ENCODE measurements at regions of chr21 and their contacts with region 1.

Region 1: GRCh38 chr21:44873356-44874239 is at the start of gene PTTG1IP:
- DNase-seq: peak; percentile 98 to 100 (median 99)
- ATAC-seq: peak; percentile 76
- H3K4me3 ChIP-seq: peak within 1 kb of the TSS; percentile 76
- H3K4me3 Mint-ChIP-seq: peak within 1 kb of the TSS; percentile 97
- H3K27ac ChIP-seq: peak within 1 kb of the TSS; percentile 78 to 81
- H3K27ac Mint-ChIP-seq: peak within 1 kb of the TSS; percentile 92
- H3K4me1 ChIP-seq: peaks cover 62% of the 10 kb centered on the region
- H3K4me1 Mint-ChIP-seq: peaks cover 60% of the 10 kb centered on the region
- H3K27me3 ChIP-seq: no peaks in the 10 kb centered on the region
- H3K27me3 Mint-ChIP-seq: no peaks in the 10 kb centered on the region
- CTCF ChIP-seq: no peak
- total RNA-seq, gene PTTG1IP: 99.0 to 99.5 TPM

Region 2: GRCh38 chr21:44510508-44511210 is 362.9 kb before region 1 on chr21:
- CTCF ChIA-PET with region 1: interaction called, 8 read pairs
- POLR2A ChIA-PET with region 1: no interaction called
- intact Hi-C with region 1: loop called in 1 of 2 experiments (anchors 5 kb)
- DNase-seq: peak; percentile 68 to 91 (median 82)
- ATAC-seq: peak; percentile 96
- H3K4me3 ChIP-seq: peak overlapping the region; percentile 41
- H3K4me3 Mint-ChIP-seq: peak overlapping the region; percentile 42
- H3K27ac ChIP-seq: no peak overlapping the region
- H3K27ac Mint-ChIP-seq: no peak overlapping the region
- H3K4me1 ChIP-seq: peaks cover 12% of the 10 kb centered on the region
- H3K4me1 Mint-ChIP-seq: no peaks in the 10 kb centered on the region
- H3K27me3 ChIP-seq: no peaks in the 10 kb centered on the region
- H3K27me3 Mint-ChIP-seq: no peaks in the 10 kb centered on the region
- CTCF ChIP-seq: peak; percentile 96

Region 3: DNA sequence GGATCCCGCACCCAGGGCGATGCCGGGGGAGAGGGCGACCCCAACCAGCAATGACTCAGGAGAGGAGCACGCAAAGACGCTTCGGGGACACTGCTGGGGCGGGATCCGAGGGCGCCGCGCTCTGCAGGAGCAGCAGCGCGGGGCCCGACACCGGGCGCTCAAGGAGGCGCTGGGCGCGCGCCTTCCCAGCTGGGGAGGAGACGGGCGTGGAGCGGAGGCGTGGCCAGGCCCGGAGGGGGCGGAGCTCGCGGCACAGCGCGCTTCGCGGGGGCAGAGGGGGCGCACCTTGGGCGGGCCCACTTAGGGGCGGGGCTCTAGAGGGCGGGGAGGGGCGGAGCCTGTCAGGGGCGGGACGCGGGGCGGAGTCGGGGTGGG is 56.1 kb before region 1 on chr21:
- CTCF ChIA-PET with region 1: interaction called, 3 read pairs
- POLR2A ChIA-PET with region 1: interaction called, 29 read pairs
- intact Hi-C with region 1: loop called (anchors 1 to 2 kb)
- DNase-seq: peak; percentile 87 to 97 (median 94)
- ATAC-seq: peak; percentile 85
- H3K4me3 ChIP-seq: peak overlapping the region; percentile 61
- H3K4me3 Mint-ChIP-seq: peak overlapping the region; percentile 82
- H3K27ac ChIP-seq: no peak overlapping the region
- H3K27ac Mint-ChIP-seq: peak overlapping the region; percentile 65
- H3K4me1 ChIP-seq: peaks cover 19% of the 10 kb centered on the region
- H3K4me1 Mint-ChIP-seq: peaks cover 13% of the 10 kb centered on the region
- H3K27me3 ChIP-seq: no peaks in the 10 kb centered on the region
- H3K27me3 Mint-ChIP-seq: no peaks in the 10 kb centered on the region
- CTCF ChIP-seq: no peak

Region 4: GRCh38 chr21:44854664-44855446 is 18.7 kb before region 1 on chr21:
- CTCF ChIA-PET with region 1: no interaction called
- POLR2A ChIA-PET with region 1: interaction called, 13 read pairs
- intact Hi-C with region 1: loop called (anchors 2 kb)
- DNase-seq: peak in 7 of 14 experiments; percentile 26 to 55 (median 38)
- ATAC-seq: peak; percentile 71
- H3K4me3 ChIP-seq: no peak overlapping the region
- H3K4me3 Mint-ChIP-seq: peak overlapping the region; percentile 58
- H3K27ac ChIP-seq: peak overlapping the region in 1 of 2 donors; percentile 15
- H3K27ac Mint-ChIP-seq: peak overlapping the region; percentile 95
- H3K4me1 ChIP-seq: peaks cover 43% of the 10 kb centered on the region
- H3K4me1 Mint-ChIP-seq: peaks cover 62% of the 10 kb centered on the region
- H3K27me3 ChIP-seq: no peaks in the 10 kb centered on the region
- H3K27me3 Mint-ChIP-seq: no peaks in the 10 kb centered on the region
- CTCF ChIP-seq: no peak

Region 5: DNA sequence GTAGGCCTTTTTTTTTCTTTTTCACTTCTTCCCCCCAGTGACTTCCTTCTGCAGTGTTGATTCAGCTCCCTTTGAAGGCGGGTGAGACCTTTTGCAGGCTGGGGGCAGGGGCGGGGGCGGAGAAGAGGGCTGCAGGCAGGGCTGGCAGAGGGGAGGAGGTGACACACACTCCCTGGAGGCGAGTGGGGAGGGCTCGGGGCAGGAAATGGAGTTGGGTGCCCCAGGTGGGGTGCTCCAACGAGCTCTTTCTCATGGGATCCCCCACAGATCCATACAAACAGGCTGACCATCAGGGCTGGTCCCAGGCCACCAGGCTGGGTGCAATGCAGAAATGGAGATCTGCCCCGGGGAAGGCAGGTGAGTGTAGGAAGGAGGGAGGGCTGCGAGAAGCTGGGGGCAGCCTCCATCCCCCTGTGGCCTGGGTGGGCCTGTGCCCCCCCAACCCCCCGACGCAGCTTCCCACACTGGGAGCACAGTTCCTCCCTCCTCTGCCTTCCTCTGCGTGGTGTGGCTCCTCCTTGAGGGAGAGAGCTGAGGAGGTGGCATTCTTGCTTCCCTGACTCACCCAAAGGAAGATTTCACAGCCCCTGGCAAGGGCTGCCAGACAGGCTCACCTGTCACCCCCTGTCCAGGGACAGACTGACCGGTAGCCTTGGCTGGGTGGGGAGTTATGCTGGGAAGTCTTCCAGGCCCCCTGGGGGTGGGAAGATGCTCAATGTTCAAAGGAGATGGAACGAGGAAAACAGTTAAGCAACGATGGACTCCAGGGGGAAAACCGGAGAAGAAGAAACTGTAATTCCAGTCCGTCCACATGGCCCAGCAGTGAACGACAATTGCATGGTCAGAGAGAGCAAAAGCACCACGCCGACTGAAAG is 54.2 kb after region 1 on chr21:
- CTCF ChIA-PET with region 1: interaction called, 5 read pairs
- POLR2A ChIA-PET with region 1: interaction called, 46 read pairs
- intact Hi-C with region 1: loop called (anchors 2 kb)
- DNase-seq: peak; percentile 65 to 97 (median 92)
- ATAC-seq: peak; percentile 79
- H3K4me3 ChIP-seq: peak overlapping the region; percentile 83
- H3K4me3 Mint-ChIP-seq: peak overlapping the region; percentile 86
- H3K27ac ChIP-seq: peak overlapping the region; percentile 74 to 79
- H3K27ac Mint-ChIP-seq: peak overlapping the region; percentile 96
- H3K4me1 ChIP-seq: peaks cover 85% of the 10 kb centered on the region
- H3K4me1 Mint-ChIP-seq: peaks cover 85% of the 10 kb centered on the region
- H3K27me3 ChIP-seq: no peaks in the 10 kb centered on the region
- H3K27me3 Mint-ChIP-seq: no peaks in the 10 kb centered on the region
- CTCF ChIP-seq: no peak

Region 6: GRCh38 chr21:45074048-45074817 is 200.6 kb after region 1 on chr21 and contains the start of gene ADARB1:
- CTCF ChIA-PET with region 1: no interaction called
- POLR2A ChIA-PET with region 1: interaction called, 7 read pairs
- intact Hi-C with region 1: loop called (anchors 5 to 10 kb)
- DNase-seq: peak; percentile 28 to 90 (median 58)
- ATAC-seq: peak; percentile 31
- H3K4me3 ChIP-seq: peak within 1 kb of the TSS; percentile 62
- H3K4me3 Mint-ChIP-seq: peak within 1 kb of the TSS; percentile 100
- H3K27ac ChIP-seq: no peak within 1 kb of the TSS
- H3K27ac Mint-ChIP-seq: peak within 1 kb of the TSS; percentile 98
- H3K4me1 ChIP-seq: peaks cover 44% of the 10 kb centered on the region
- H3K4me1 Mint-ChIP-seq: peaks cover 42% of the 10 kb centered on the region
- H3K27me3 ChIP-seq: no peaks in the 10 kb centered on the region
- H3K27me3 Mint-ChIP-seq: no peaks in the 10 kb centered on the region
- CTCF ChIP-seq: no peak
- total RNA-seq, gene ADARB1: 27.5 to 28.6 TPM